Caco-2 (cell line): ENCODE measurements at regions of chr19 and their contacts with region 1.

Region 1: GRCh38 chr19:49937750-49938381 is 8.6 kb upstream of the NUP62 start:
- DNase-seq: peak; percentile 74 to 89
- H3K4me3 ChIP-seq: no peak overlapping the region
- H3K4me3 Mint-ChIP-seq: peak overlapping the region; percentile 34
- H3K27ac Mint-ChIP-seq: no peak overlapping the region
- H3K4me1 ChIP-seq: peaks cover 3% of the 10 kb centered on the region; the same call in 1 of the 2 replicates
- H3K4me1 Mint-ChIP-seq: peaks cover 9% of the 10 kb centered on the region
- H3K27me3 ChIP-seq: no peaks in the 10 kb centered on the region
- H3K27me3 Mint-ChIP-seq: no peaks in the 10 kb centered on the region
- CTCF ChIP-seq: peak; percentile 97 to 98

Region 2: GRCh38 chr19:49983645-49984229 is 45.9 kb after region 1 on chr19:
- CTCF ChIA-PET with region 1: no interaction called
- POLR2A ChIA-PET with region 1: no interaction called
- intact Hi-C with region 1: loop called (anchors 1 kb)
- DNase-seq: peak; percentile 65 to 78
- H3K4me3 ChIP-seq: no peak overlapping the region
- H3K4me3 Mint-ChIP-seq: no peak overlapping the region
- H3K27ac Mint-ChIP-seq: no peak overlapping the region
- H3K4me1 ChIP-seq: peaks cover 9% of the 10 kb centered on the region
- H3K4me1 Mint-ChIP-seq: no peaks in the 10 kb centered on the region
- H3K27me3 ChIP-seq: no peaks in the 10 kb centered on the region
- H3K27me3 Mint-ChIP-seq: no peaks in the 10 kb centered on the region
- CTCF ChIP-seq: peak; percentile 87 to 96